ENCODE measurements at regions of chr12 and their contacts with region 1.

Region 1: GRCh38 chr12:92019491-92020277 is 126.0 kb downstream of the BTG1 start:
- DNase-seq: no peak
- H3K4me3 ChIP-seq: no peak overlapping the region
- H3K27me3 ChIP-seq: no peaks in the 10 kb centered on the region
- CTCF ChIP-seq: no peak

Region 2: GRCh38 chr12:92002673-92003382 is 16.9 kb before region 1 on chr12:
- CTCF ChIA-PET with region 1: no interaction called
- POLR2A ChIA-PET with region 1: no interaction called
- DNase-seq: no peak
- H3K4me3 ChIP-seq: no peak overlapping the region
- H3K27me3 ChIP-seq: no peaks in the 10 kb centered on the region
- CTCF ChIP-seq: no peak

Region 3: GRCh38 chr12:92041742-92042141 is 22.1 kb after region 1 on chr12:
- CTCF ChIA-PET with region 1: no interaction called
- POLR2A ChIA-PET with region 1: no interaction called
- DNase-seq: no peak
- H3K4me3 ChIP-seq: no peak overlapping the region
- H3K27me3 ChIP-seq: no peaks in the 10 kb centered on the region
- CTCF ChIP-seq: no peak

Region 4: GRCh38 chr12:92072112-92072511 is 52.4 kb after region 1 on chr12:
- CTCF ChIA-PET with region 1: no interaction called
- POLR2A ChIA-PET with region 1: interaction called, 17 read pairs
- DNase-seq: no peak
- H3K4me3 ChIP-seq: no peak overlapping the region
- H3K27me3 ChIP-seq: no peaks in the 10 kb centered on the region
- CTCF ChIP-seq: no peak

Measured in BJ (cell line).